Activated CD4-positive, alpha-beta T cell treated with anti-CD3 and anti-CD28 coated beads, Interleukin-2, amount 10 ng/mL, durations not matched to agents 24 days and 14 days (primary cell): ENCODE measurements at regions of chr19 and their contacts with region 1.

Region 1: GRCh38 chr19:18496167-18496979 is 25.5 kb downstream of the ELL start:
- DNase-seq: peak; percentile 85
- H3K4me3 Mint-ChIP-seq: peak overlapping the region; percentile 66
- H3K27ac Mint-ChIP-seq: peak overlapping the region; percentile 89
- H3K4me1 Mint-ChIP-seq: peaks cover 60% of the 10 kb centered on the region
- H3K27me3 Mint-ChIP-seq: no peaks in the 10 kb centered on the region

Region 2: GRCh38 chr19:18445262-18445948 is 51.0 kb before region 1 on chr19:
- intact Hi-C with region 1: loop called (anchors 2 kb)
- DNase-seq: no peak
- H3K4me3 Mint-ChIP-seq: no peak overlapping the region
- H3K27ac Mint-ChIP-seq: no peak overlapping the region
- H3K4me1 Mint-ChIP-seq: peaks cover 19% of the 10 kb centered on the region
- H3K27me3 Mint-ChIP-seq: no peaks in the 10 kb centered on the region

Region 3: DNA sequence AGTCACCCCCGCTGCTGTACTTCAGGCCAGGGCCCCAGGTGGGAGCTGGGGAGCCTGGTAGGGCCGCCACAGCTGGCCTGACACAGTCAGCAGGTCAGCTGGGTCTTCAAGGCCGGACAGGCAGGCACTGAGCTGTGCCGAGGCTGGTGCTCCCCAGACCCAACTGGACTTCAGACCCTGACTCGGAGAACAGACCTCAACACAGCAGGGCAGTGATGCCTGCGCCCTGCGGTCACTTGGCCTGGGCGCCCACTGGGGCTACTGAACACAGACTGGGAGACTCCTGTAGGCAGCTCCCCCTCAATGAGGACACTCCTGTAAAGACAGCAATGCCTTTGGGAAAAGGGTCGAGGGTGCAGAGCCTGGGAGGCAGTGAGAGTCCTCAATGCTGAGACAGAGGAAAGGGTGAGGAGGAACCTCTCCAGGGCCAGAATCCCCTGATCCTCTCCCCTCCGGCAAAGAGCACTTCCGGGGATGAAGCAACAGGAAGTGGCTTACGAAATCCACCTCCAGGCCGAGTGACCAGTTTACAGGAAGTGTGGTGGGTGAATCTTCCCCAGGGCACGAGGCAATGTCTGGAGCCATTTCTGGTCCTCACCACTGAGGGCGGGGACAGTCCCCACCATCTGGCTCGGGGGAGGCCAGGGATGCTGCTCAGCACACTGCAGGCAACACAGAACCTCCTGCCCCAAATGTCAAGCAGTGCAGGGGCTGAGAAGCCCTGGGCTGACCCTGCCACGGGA is 17.6 kb before region 1 on chr19:
- intact Hi-C with region 1: loop called (anchors 1 kb)
- DNase-seq: peak; percentile 84
- H3K4me3 Mint-ChIP-seq: peak overlapping the region; percentile 82
- H3K27ac Mint-ChIP-seq: peak overlapping the region; percentile 96
- H3K4me1 Mint-ChIP-seq: peaks cover 61% of the 10 kb centered on the region
- H3K27me3 Mint-ChIP-seq: no peaks in the 10 kb centered on the region